CD4-positive, alpha-beta memory T cell (primary cell): ENCODE measurements at regions of chr3 and their contacts with region 1.

Region 1: GRCh38 chr3:138186803-138187295 is 252 bp upstream of the ARMC8 start:
- DNase-seq: peak; percentile 88 to 90 (median 89)
- H3K4me3 ChIP-seq: peak overlapping the region; percentile 94 to 97
- H3K4me3 Mint-ChIP-seq: peak overlapping the region; percentile 94 to 99 (median 97)
- H3K27ac ChIP-seq: peak overlapping the region; percentile 87
- H3K27ac Mint-ChIP-seq: peak overlapping the region; percentile 90 to 98 (median 96)
- H3K4me1 ChIP-seq: peaks cover 42% of the 10 kb centered on the region
- H3K4me1 Mint-ChIP-seq: peaks cover 30 to 51% (median 40%) of the 10 kb centered on the region in 4 donors
- H3K27me3 ChIP-seq: no peaks in the 10 kb centered on the region
- H3K27me3 Mint-ChIP-seq: peaks cover 0 to 2% of the 10 kb centered on the region in 2 donors

Region 2: DNA sequence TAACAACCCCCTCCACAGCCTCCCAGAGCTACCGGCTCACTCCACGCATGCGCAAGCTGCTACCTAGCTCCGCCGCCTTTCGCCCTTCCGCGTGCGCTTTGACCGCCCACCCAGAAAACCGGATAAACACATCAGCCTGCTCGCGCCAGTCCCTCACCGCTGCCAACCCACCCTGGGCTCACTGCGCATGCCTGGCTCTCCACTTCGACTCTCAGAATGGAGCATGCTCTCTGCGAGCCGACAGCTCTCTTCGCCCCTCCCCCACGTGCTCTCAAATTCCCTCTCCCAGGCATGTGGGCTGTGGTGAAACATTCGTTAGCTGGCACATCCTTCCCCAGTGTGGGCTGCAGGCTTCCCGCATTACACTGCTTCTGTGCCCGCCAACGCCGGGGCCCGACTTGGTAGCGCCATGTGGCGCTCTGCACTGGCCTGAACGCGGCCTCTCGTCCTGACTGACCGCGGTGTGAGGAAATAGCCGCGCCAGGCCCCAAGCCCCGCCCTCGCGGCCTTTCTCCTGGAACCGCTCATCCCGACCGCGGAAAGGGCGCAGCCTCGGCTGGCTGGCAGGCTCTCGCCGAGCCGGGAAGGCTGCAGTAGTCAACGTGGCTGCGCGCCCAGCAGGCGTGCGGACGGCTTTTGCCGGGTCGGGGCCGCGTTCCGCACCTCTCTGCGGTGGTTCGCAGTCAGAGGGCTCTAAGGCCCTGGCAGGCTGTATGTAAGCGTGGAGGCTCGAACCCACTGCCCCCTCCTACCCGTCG is 1990.3 kb before region 1 on chr3:
- CTCF ChIA-PET with region 1: no interaction called
- POLR2A ChIA-PET with region 1: no interaction called
- intact Hi-C with region 1: loop called (anchors 10 kb)
- DNase-seq: peak; percentile 97 to 98 (median 97)
- H3K4me3 ChIP-seq: peak overlapping the region; percentile 66 to 71
- H3K4me3 Mint-ChIP-seq: peak overlapping the region; percentile 94 to 100 (median 99)
- H3K27ac ChIP-seq: peak overlapping the region; percentile 97
- H3K27ac Mint-ChIP-seq: peak overlapping the region; percentile 98 to 100 (median 100)
- H3K4me1 ChIP-seq: peaks cover 26% of the 10 kb centered on the region
- H3K4me1 Mint-ChIP-seq: peaks cover 24 to 52% (median 34%) of the 10 kb centered on the region in 4 donors
- H3K27me3 ChIP-seq: no peaks in the 10 kb centered on the region
- H3K27me3 Mint-ChIP-seq: peaks cover 3 to 9% of the 10 kb centered on the region in 2 donors

Region 3: DNA sequence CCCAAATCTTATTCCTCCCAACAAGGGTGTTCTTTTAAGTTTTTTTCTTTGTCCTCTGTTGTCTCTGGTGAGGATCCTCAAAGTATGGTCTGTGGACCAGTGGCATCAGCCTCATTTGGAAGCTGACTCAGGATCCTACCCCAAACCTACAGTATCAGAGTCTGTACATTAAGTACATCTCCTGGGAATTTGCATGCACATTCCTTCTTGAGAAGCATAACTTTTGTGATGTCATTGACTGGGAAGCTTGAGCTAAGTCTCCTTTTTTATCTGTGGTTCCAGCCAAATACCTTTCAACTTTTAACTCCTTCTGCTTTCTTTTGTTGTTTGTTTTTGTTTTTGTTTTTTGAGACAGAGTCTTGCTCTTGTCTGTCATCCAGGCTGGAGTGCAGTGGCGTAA is 40.8 kb after region 1 on chr3:
- CTCF ChIA-PET with region 1: interaction called, 4 read pairs
- POLR2A ChIA-PET with region 1: no interaction called
- intact Hi-C with region 1: loop called (anchors 5 kb)
- DNase-seq: no peak
- H3K4me3 ChIP-seq: no peak overlapping the region
- H3K4me3 Mint-ChIP-seq: no peak overlapping the region
- H3K27ac ChIP-seq: no peak overlapping the region
- H3K27ac Mint-ChIP-seq: no peak overlapping the region
- H3K4me1 ChIP-seq: peaks cover 3% of the 10 kb centered on the region
- H3K4me1 Mint-ChIP-seq: peaks cover 4 to 9% (median 5%) of the 10 kb centered on the region in 4 donors
- H3K27me3 ChIP-seq: no peaks in the 10 kb centered on the region
- H3K27me3 Mint-ChIP-seq: no peaks in the 10 kb centered on the region

Region 4: DNA sequence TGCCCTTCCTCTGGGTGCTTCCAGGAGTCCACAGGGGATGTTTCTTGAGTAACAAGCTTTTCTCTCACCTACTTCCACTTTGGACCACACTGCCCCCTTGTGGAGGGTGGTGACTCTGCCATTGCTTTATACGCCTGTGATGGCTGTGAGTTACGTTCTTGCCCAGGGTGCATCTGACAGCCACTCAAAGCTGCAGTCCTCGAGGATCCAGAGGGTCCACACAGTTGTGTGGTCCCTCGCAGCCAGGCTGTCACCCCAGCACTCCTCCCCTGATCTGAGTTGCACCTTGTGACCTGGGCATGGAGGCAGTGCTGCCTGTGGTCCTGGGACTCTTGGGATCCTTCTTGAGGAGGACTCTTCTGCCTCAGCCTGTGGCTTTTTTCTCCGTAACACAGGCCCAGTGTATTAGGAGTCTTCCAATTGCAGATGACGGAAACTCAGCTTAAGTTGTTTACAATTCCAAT is 736.7 kb after region 1 on chr3:
- CTCF ChIA-PET with region 1: interaction called, 4 read pairs
- POLR2A ChIA-PET with region 1: no interaction called
- intact Hi-C with region 1: loop called (anchors 5 kb)
- DNase-seq: peak; percentile 73 to 79 (median 78)
- H3K4me3 ChIP-seq: no peak overlapping the region
- H3K4me3 Mint-ChIP-seq: peak overlapping the region in 1 of 8 donors; percentile 53
- H3K27ac ChIP-seq: no peak overlapping the region
- H3K27ac Mint-ChIP-seq: peak overlapping the region in 1 of 7 donors; percentile 7
- H3K4me1 ChIP-seq: no peaks in the 10 kb centered on the region
- H3K4me1 Mint-ChIP-seq: peaks cover 0 to 1% (median under 1%) of the 10 kb centered on the region in 4 donors
- H3K27me3 ChIP-seq: peaks cover 3% of the 10 kb centered on the region
- H3K27me3 Mint-ChIP-seq: peaks cover 4 to 11% of the 10 kb centered on the region in 2 donors

Region 5: GRCh38 chr3:139343895-139344856 is 1157.3 kb after region 1 on chr3 and contains the start of gene MRPS22:
- CTCF ChIA-PET with region 1: no interaction called
- POLR2A ChIA-PET with region 1: no interaction called
- intact Hi-C with region 1: loop called (anchors 2 kb)
- DNase-seq: peak; percentile 84 to 90 (median 84)
- H3K4me3 ChIP-seq: peak within 1 kb of the TSS; percentile 66 to 95
- H3K4me3 Mint-ChIP-seq: peak within 1 kb of the TSS in 2 of 8 donors; percentile 67 to 71
- H3K27ac ChIP-seq: peak within 1 kb of the TSS; percentile 79
- H3K27ac Mint-ChIP-seq: peak within 1 kb of the TSS in 3 of 7 donors; percentile 78 to 89 (median 81)
- H3K4me1 ChIP-seq: peaks cover 24% of the 10 kb centered on the region
- H3K4me1 Mint-ChIP-seq: peaks cover 3 to 11% (median 7%) of the 10 kb centered on the region in 4 donors
- H3K27me3 ChIP-seq: peaks cover 4% of the 10 kb centered on the region
- H3K27me3 Mint-ChIP-seq: peaks cover 0 to 7% of the 10 kb centered on the region in 2 donors
- total RNA-seq, gene MRPS22: 33.4 to 36.9 TPM